Left ventricle myocardium superior (tissue), 1 donor: ENCODE measurements at regions of chr1 and their contacts with region 1.

Region 1: DNA sequence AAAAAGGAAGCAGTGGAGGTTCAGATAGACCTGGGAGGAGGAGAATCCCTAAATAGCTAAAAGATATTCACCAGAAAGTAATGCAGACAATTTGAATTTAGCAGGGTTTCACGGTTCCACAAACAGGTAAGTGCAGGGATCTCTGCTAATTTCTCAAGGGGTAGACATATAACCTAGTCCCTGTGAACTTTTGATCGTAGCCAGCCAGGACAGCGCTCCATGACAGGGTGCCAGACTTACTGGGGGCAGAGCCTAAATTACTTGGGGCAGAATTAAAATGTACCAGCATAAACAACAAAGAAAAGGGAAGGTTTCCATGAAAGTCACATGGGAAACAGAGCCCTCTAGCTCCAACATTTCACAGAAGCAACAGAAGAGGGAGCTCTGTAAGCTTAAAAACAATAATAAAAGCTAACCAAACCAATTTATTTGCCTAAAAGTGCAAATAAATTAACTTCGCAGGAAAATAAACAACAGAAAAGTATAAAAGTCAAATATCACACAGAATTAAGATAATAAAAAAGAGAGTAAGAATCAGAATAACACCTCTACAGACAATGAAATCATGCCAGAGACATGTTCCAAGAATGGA is 198.3 kb downstream of the DUSP10 start:
- DNase-seq: no peak
- ATAC-seq: peak; percentile 42

Region 2: GRCh38 chr1:221109930-221110329 is 433.7 kb before region 1 on chr1:
- intact Hi-C with region 1: no loop called
- DNase-seq: no peak
- ATAC-seq: no peak

Region 3: GRCh38 chr1:221994274-221994698 is 450.7 kb after region 1 on chr1:
- intact Hi-C with region 1: loop called (anchors 10 kb)
- DNase-seq: no peak
- ATAC-seq: no peak

Region 4: GRCh38 chr1:222167111-222167510 is 623.5 kb after region 1 on chr1:
- intact Hi-C with region 1: loop called (anchors 5 kb)
- DNase-seq: peak; percentile 43
- ATAC-seq: peak; percentile 29